ENCODE measurements at regions of chr4 and their contacts with region 1.

Region 1: GRCh38 chr4:170027181-170027829 is 1.1 kb upstream of the MFAP3L start:
- DNase-seq: peak; percentile 74 to 95 (median 86)
- ATAC-seq: peak; percentile 77
- H3K4me3 ChIP-seq: peak overlapping the region; percentile 87
- H3K4me3 Mint-ChIP-seq: peak overlapping the region; percentile 94
- H3K27ac ChIP-seq: no peak overlapping the region
- H3K27ac Mint-ChIP-seq: peak overlapping the region; percentile 70
- H3K4me1 ChIP-seq: peaks cover 19% of the 10 kb centered on the region
- H3K4me1 Mint-ChIP-seq: peaks cover 9% of the 10 kb centered on the region
- H3K27me3 ChIP-seq: peaks cover 0 to 14% of the 10 kb centered on the region in 2 experiments
- H3K27me3 Mint-ChIP-seq: peaks cover 22% of the 10 kb centered on the region
- CTCF ChIP-seq: no peak

Region 2: GRCh38 chr4:168480931-168481611 is 1546.2 kb before region 1 on chr4:
- CTCF ChIA-PET with region 1: no interaction called
- POLR2A ChIA-PET with region 1: no interaction called
- intact Hi-C with region 1: loop called (anchors 5 to 10 kb)
- DNase-seq: peak; percentile 12 to 87 (median 34)
- ATAC-seq: peak; percentile 68
- H3K4me3 ChIP-seq: peak overlapping the region; percentile 84
- H3K4me3 Mint-ChIP-seq: peak overlapping the region; percentile 99
- H3K27ac ChIP-seq: peak overlapping the region; percentile 78 to 86
- H3K27ac Mint-ChIP-seq: peak overlapping the region; percentile 97
- H3K4me1 ChIP-seq: peaks cover 20% of the 10 kb centered on the region
- H3K4me1 Mint-ChIP-seq: peaks cover 78% of the 10 kb centered on the region
- H3K27me3 ChIP-seq: no peaks in the 10 kb centered on the region
- H3K27me3 Mint-ChIP-seq: no peaks in the 10 kb centered on the region
- CTCF ChIP-seq: no peak

Region 3: GRCh38 chr4:169270810-169271691 is 756.3 kb before region 1 on chr4 and contains the start of gene SH3RF1:
- CTCF ChIA-PET with region 1: no interaction called
- POLR2A ChIA-PET with region 1: no interaction called
- intact Hi-C with region 1: no loop called
- DNase-seq: peak in 2 of 14 experiments; percentile 25 to 45
- ATAC-seq: peak; percentile 43
- H3K4me3 ChIP-seq: peak within 1 kb of the TSS; percentile 43
- H3K4me3 Mint-ChIP-seq: peak within 1 kb of the TSS; percentile 68
- H3K27ac ChIP-seq: no peak within 1 kb of the TSS
- H3K27ac Mint-ChIP-seq: no peak within 1 kb of the TSS
- H3K4me1 ChIP-seq: peaks cover 15% of the 10 kb centered on the region
- H3K4me1 Mint-ChIP-seq: peaks cover 4% of the 10 kb centered on the region
- H3K27me3 ChIP-seq: peaks cover 40 to 44% of the 10 kb centered on the region in 2 experiments
- H3K27me3 Mint-ChIP-seq: peaks cover 65% of the 10 kb centered on the region
- CTCF ChIP-seq: no peak
- total RNA-seq, gene SH3RF1: 0.25 TPM in 1 of 2 experiments, not detected in the other

Region 4: DNA sequence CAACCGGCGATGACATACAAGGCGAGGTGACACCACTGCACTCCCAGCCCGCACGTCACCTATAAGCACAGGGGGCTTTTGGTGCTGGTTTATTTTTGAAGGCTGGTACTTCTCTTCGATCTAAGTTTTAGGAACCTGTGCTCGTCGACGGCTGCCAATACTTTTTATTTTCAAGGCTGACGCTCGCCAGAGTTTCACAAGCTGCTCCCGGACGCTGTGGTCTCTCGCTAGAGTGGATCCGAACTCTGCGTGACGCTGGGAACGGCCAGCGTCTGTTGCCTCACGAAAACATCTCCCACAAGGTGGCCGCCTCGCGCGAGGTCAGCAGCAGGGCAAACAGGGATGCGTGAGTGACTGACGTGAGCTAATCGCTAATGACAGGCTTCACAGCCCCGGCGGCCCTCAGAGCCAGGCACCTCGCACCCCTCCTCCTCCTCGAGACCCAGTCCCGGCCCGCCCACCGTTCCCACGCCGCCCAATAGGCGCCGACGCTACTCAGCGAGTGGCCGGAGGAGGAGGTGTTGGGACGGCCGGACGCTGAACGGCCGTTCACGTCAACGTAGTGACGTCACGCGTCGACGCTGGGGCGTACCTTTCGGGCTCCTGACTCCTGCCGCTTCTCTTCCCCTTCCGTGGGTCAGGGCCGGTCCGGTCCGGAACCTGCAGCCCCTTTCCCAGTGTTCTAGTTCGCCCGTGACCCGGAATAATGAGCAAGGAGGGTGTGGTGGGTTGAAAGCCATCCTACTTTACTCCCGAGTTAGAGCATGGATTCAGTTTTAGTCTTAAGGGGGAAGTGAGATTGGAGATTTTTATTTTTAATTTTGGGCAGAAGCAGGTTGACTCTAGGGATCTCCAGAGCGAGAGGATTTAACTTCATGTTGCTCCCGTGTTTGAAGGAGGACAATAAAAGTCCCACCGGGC is 407.1 kb before region 1 on chr4 and contains the start of gene CLCN3:
- CTCF ChIA-PET with region 1: no interaction called
- POLR2A ChIA-PET with region 1: interaction called, 11 read pairs
- intact Hi-C with region 1: no loop called
- DNase-seq: peak; percentile 72 to 94 (median 87)
- ATAC-seq: peak; percentile 65
- H3K4me3 ChIP-seq: peak within 1 kb of the TSS; percentile 91
- H3K4me3 Mint-ChIP-seq: peak within 1 kb of the TSS; percentile 98
- H3K27ac ChIP-seq: peak within 1 kb of the TSS; percentile 94 to 96
- H3K27ac Mint-ChIP-seq: peak within 1 kb of the TSS; percentile 98
- H3K4me1 ChIP-seq: peaks cover 19% of the 10 kb centered on the region
- H3K4me1 Mint-ChIP-seq: peaks cover 74% of the 10 kb centered on the region
- H3K27me3 ChIP-seq: no peaks in the 10 kb centered on the region
- H3K27me3 Mint-ChIP-seq: no peaks in the 10 kb centered on the region
- CTCF ChIP-seq: no peak
- total RNA-seq, gene CLCN3: 9.0 to 9.2 TPM

Region 5: GRCh38 chr4:169757575-169758184 is 269.6 kb before region 1 on chr4 and contains the start of gene HPF1:
- CTCF ChIA-PET with region 1: no interaction called
- POLR2A ChIA-PET with region 1: interaction called, 3 read pairs
- intact Hi-C with region 1: loop called in 1 of 2 experiments (anchors 2 kb)
- DNase-seq: peak; percentile 83 to 99 (median 92)
- ATAC-seq: peak; percentile 97
- H3K4me3 ChIP-seq: peak within 1 kb of the TSS; percentile 83
- H3K4me3 Mint-ChIP-seq: peak within 1 kb of the TSS; percentile 85
- H3K27ac ChIP-seq: peak within 1 kb of the TSS; percentile 23 to 29
- H3K27ac Mint-ChIP-seq: peak within 1 kb of the TSS; percentile 26
- H3K4me1 ChIP-seq: peaks cover 17% of the 10 kb centered on the region
- H3K4me1 Mint-ChIP-seq: peaks cover 33% of the 10 kb centered on the region
- H3K27me3 ChIP-seq: no peaks in the 10 kb centered on the region
- H3K27me3 Mint-ChIP-seq: no peaks in the 10 kb centered on the region
- CTCF ChIP-seq: no peak
- total RNA-seq, gene HPF1: 4.4 to 4.8 TPM

Region 6: GRCh38 chr4:170051402-170051801 is 24.1 kb after region 1 on chr4:
- CTCF ChIA-PET with region 1: no interaction called
- POLR2A ChIA-PET with region 1: no interaction called
- intact Hi-C with region 1: no loop called
- DNase-seq: no peak
- ATAC-seq: no peak
- H3K4me3 ChIP-seq: no peak overlapping the region
- H3K4me3 Mint-ChIP-seq: no peak overlapping the region
- H3K27ac ChIP-seq: no peak overlapping the region
- H3K27ac Mint-ChIP-seq: no peak overlapping the region
- H3K4me1 ChIP-seq: no peaks in the 10 kb centered on the region
- H3K4me1 Mint-ChIP-seq: no peaks in the 10 kb centered on the region
- H3K27me3 ChIP-seq: peaks cover 0 to 4% of the 10 kb centered on the region in 2 experiments
- H3K27me3 Mint-ChIP-seq: peaks cover 5% of the 10 kb centered on the region
- CTCF ChIP-seq: no peak

Region 7: GRCh38 chr4:171256223-171256622 is 1228.9 kb after region 1 on chr4:
- CTCF ChIA-PET with region 1: no interaction called
- POLR2A ChIA-PET with region 1: no interaction called
- intact Hi-C with region 1: no loop called
- DNase-seq: no peak
- ATAC-seq: no peak
- H3K4me3 ChIP-seq: no peak overlapping the region
- H3K4me3 Mint-ChIP-seq: no peak overlapping the region
- H3K27ac ChIP-seq: no peak overlapping the region
- H3K27ac Mint-ChIP-seq: no peak overlapping the region
- H3K4me1 ChIP-seq: no peaks in the 10 kb centered on the region
- H3K4me1 Mint-ChIP-seq: no peaks in the 10 kb centered on the region
- H3K27me3 ChIP-seq: no peaks in the 10 kb centered on the region
- H3K27me3 Mint-ChIP-seq: no peaks in the 10 kb centered on the region
- CTCF ChIP-seq: no peak